ENCODE measurements at regions of chr12 and their contacts with region 1.

Region 1: GRCh38 chr12:132144115-132144812 is at the starts of genes DDX51 and NOC4L:
- DNase-seq: peak; percentile 84 to 89
- ATAC-seq: peak; percentile 93 to 95
- H3K4me3 ChIP-seq: peak within 1 kb of the TSS; percentile 95 to 97 (median 96)
- H3K27ac ChIP-seq: peak within 1 kb of the TSS; percentile 83 to 96 (median 94)
- H3K4me1 ChIP-seq: peaks cover 17 to 22% of the 10 kb centered on the region in 2 donors
- H3K27me3 ChIP-seq: no peaks in the 10 kb centered on the region
- CTCF ChIP-seq: peak in 3 of 5 experiments; percentile 10 to 60 (median 48)
- POLR2A ChIP-seq: peak; percentile 43 to 57
- total RNA-seq, gene DDX51: 5.8 to 7.8 (median 6.5) TPM
- total RNA-seq, gene NOC4L: 11.1 to 24.0 (median 21.2) TPM

Region 2: DNA sequence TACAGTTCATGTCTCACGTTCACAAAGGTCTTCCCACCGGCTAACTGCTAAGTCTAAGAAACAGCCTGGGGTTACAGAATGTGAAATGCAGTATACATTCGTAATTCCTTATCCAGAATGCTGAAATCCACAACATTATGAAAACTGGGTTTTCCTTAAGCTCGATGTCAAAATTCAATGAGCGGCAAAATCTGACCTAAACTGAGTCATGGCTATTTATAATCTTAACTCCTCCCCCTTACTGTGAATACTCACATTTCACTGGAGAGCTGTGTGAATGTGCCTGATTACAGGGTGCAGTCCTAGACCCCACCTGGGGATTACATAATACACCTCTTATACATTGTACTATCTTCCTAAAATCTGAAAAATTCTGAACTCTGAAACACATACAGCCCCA is 1340.6 kb before region 1 on chr12:
- in situ Hi-C with region 1: no loop called
- intact Hi-C with region 1: no loop called
- DNase-seq: no peak
- ATAC-seq: no peak
- H3K4me3 ChIP-seq: no peak overlapping the region
- H3K27ac ChIP-seq: no peak overlapping the region
- H3K4me1 ChIP-seq: no peaks in the 10 kb centered on the region
- H3K27me3 ChIP-seq: no peaks in the 10 kb centered on the region
- CTCF ChIP-seq: no peak
- POLR2A ChIP-seq: no peak

Region 3: GRCh38 chr12:130871286-130872178 is 1272.7 kb before region 1 on chr12 and contains the start of gene RAN:
- in situ Hi-C with region 1: no loop called
- intact Hi-C with region 1: loop called (anchors 10 kb)
- DNase-seq: peak; percentile 88
- ATAC-seq: peak; percentile 90
- H3K4me3 ChIP-seq: peak within 1 kb of the TSS; percentile 55 to 90 (median 68)
- H3K27ac ChIP-seq: peak within 1 kb of the TSS; percentile 71 to 91 (median 83)
- H3K4me1 ChIP-seq: peaks cover 11 to 15% of the 10 kb centered on the region in 2 donors
- H3K27me3 ChIP-seq: no peaks in the 10 kb centered on the region
- CTCF ChIP-seq: no peak
- POLR2A ChIP-seq: peak; percentile 63 to 77
- total RNA-seq, gene RAN: 125 to 299 (median 197) TPM

Region 4: GRCh38 chr12:131710464-131711457 is 433.5 kb before region 1 on chr12 and contains the start of gene SFSWAP:
- in situ Hi-C with region 1: no loop called
- intact Hi-C with region 1: loop called (anchors 5 kb)
- DNase-seq: peak; percentile 46 to 50
- ATAC-seq: peak; percentile 93 to 95
- H3K4me3 ChIP-seq: peak within 1 kb of the TSS; percentile 80 to 99 (median 97)
- H3K27ac ChIP-seq: peak within 1 kb of the TSS; percentile 87 to 97 (median 90)
- H3K4me1 ChIP-seq: peaks cover 23 to 24% of the 10 kb centered on the region in 2 donors
- H3K27me3 ChIP-seq: no peaks in the 10 kb centered on the region
- CTCF ChIP-seq: peak in 1 of 5 experiments; percentile 13
- POLR2A ChIP-seq: peak; percentile 52 to 75
- total RNA-seq, gene SFSWAP: 18.0 to 29.7 (median 25.4) TPM

Region 5: GRCh38 chr12:131928711-131929580 is 215.3 kb before region 1 on chr12 and contains the start of gene PUS1:
- in situ Hi-C with region 1: no loop called
- intact Hi-C with region 1: loop called (anchors 10 kb)
- DNase-seq: peak; percentile 92 to 94
- ATAC-seq: peak; percentile 85 to 89
- H3K4me3 ChIP-seq: peak within 1 kb of the TSS; percentile 93 to 100 (median 96)
- H3K27ac ChIP-seq: peak within 1 kb of the TSS; percentile 80 to 93 (median 92)
- H3K4me1 ChIP-seq: peaks cover 10 to 11% of the 10 kb centered on the region in 2 donors
- H3K27me3 ChIP-seq: no peaks in the 10 kb centered on the region
- CTCF ChIP-seq: no peak
- POLR2A ChIP-seq: peak; percentile 66 to 80
- total RNA-seq, gene PUS1: 10.4 to 29.0 (median 12.2) TPM

Region 6: GRCh38 chr12:132083941-132084620 is 60.2 kb before region 1 on chr12:
- in situ Hi-C with region 1: no loop called
- intact Hi-C with region 1: loop called (anchors 2 kb)
- DNase-seq: peak; percentile 90
- ATAC-seq: peak; percentile 87 to 92
- H3K4me3 ChIP-seq: peak overlapping the region; percentile 72 to 98 (median 87)
- H3K27ac ChIP-seq: peak overlapping the region; percentile 93 to 97 (median 94)
- H3K4me1 ChIP-seq: peaks cover 17 to 22% of the 10 kb centered on the region in 2 donors
- H3K27me3 ChIP-seq: no peaks in the 10 kb centered on the region
- CTCF ChIP-seq: peak in 1 of 5 experiments; percentile 5
- POLR2A ChIP-seq: peak; percentile 94 to 96

Region 7: GRCh38 chr12:132489602-132490239 is 345.5 kb after region 1 on chr12 and contains the start of gene FBRSL1:
- in situ Hi-C with region 1: no loop called
- intact Hi-C with region 1: loop called (anchors 5 kb)
- DNase-seq: peak; percentile 78 to 84
- ATAC-seq: peak; percentile 77 to 84
- H3K4me3 ChIP-seq: peak within 1 kb of the TSS; percentile 62 to 92 (median 80)
- H3K27ac ChIP-seq: peak within 1 kb of the TSS; percentile 73 to 81 (median 78)
- H3K4me1 ChIP-seq: peaks cover 29 to 39% of the 10 kb centered on the region in 2 donors
- H3K27me3 ChIP-seq: no peaks in the 10 kb centered on the region
- CTCF ChIP-seq: no peak
- POLR2A ChIP-seq: peak; percentile 48 to 53
- total RNA-seq, gene FBRSL1: 8.4 to 29.4 (median 22.8) TPM

Measured in gastrocnemius medialis (tissue), 4 donors.